A673 (cell line): ENCODE measurements at regions of chr18 and their contacts with region 1.

Region 1: DNA sequence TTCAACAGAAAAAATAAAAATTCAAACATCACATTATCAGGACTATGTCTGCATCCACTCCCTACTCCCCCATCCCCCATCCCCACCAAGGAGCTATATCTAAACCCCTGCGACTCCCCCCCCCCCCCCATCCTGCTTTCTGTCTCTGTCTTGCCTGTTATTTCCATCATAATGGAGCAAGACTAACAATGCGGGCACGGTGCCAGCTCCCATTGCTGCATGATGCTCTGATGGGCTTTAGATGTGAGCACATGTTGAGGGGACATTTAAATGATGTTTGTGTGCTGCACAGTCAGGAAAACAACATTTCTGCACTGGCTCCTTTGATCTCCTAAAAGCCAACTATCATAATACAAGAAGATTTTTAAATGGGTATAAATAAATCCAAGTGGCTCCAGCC is 644.2 kb upstream of the SETBP1 start:
- DNase-seq: peak; percentile 13
- H3K4me3 ChIP-seq: no peak overlapping the region
- H3K27ac ChIP-seq: no peak overlapping the region
- H3K4me1 ChIP-seq: no peaks in the 10 kb centered on the region
- H3K27me3 ChIP-seq: no peaks in the 10 kb centered on the region
- CTCF ChIP-seq: no peak

Region 2: DNA sequence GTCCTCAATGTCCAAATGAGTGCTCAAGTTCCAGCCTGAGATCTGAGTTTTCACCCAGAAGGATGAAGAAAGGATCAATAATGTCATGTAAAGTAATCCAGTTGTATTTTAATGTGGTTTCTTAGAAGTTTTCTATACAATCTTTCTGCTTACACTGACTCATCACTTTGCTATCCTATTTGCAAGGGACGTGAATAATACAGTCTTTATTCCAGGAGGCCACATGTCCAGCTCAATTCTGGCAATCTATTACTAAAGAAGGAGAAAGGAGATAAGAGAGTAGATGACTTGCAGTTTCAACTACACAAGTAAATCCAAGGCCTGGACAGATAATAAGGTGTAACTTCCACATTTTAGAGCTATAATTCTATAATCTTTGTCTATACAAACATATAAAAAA is 43.1 kb after region 1 on chr18:
- CTCF ChIA-PET with region 1: no interaction called
- POLR2A ChIA-PET with region 1: no interaction called
- intact Hi-C with region 1: loop called (anchors 1 kb)
- DNase-seq: peak; percentile 6
- H3K4me3 ChIP-seq: no peak overlapping the region
- H3K27ac ChIP-seq: no peak overlapping the region
- H3K4me1 ChIP-seq: no peaks in the 10 kb centered on the region
- H3K27me3 ChIP-seq: no peaks in the 10 kb centered on the region
- CTCF ChIP-seq: no peak